ENCODE measurements at regions of chr19 and their contacts with region 1.

Region 1: GRCh38 chr19:572140-572742 is at the start of gene BSG:
- DNase-seq: peak; percentile 94 to 99 (median 97)
- H3K4me3 ChIP-seq: peak within 1 kb of the TSS; percentile 69 to 100 (median 97)
- H3K27ac ChIP-seq: peak within 1 kb of the TSS; percentile 28 to 98 (median 91)
- H3K27me3 ChIP-seq: peaks cover 0 to 4% (median 0%) of the 10 kb centered on the region in 45 donors
- CTCF ChIP-seq: peak in 17 of 56 donors; percentile 2 to 38 (median 21)
- total RNA-seq, gene BSG: 350 to 867 (median 549) TPM

Region 2: DNA sequence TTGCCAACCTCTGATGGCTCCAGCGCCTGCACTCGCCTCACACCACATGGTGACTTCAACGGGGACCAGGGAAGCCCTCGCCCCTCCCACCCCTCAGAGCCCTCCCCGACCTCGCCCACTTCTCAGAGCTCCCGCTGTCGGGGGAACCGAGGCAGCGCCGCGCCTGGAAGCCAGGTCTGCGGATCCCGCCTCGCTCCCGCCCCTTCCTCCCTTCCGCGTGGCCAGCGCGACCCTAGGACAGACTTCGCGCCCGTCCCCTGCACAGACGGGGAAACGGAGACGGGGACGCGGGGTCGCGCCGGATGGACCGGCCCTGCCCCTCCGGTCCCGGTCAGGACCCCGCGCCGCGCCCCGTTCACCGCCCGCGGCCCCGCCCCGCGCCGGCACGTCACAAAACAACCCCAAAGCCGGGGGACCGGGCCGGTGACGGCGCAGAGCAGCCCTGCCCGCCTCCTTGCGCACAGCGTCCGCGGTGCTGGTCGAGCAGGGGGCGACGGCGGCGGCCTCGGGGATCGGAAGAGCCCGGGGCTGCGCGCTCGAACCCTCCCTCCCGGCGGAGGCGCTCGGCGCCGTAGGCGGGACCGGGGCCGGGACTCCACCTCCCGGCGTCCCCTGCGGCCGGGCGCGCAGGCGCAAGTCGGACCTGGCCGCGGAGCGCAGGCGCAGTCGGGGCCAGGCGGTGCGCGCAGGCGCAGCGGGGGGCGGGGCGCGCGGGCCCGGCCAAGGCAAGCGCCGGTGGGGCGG is 41.1 kb before region 1 on chr19:
- intact Hi-C with region 1: loop called (anchors 1 to 2 kb)
- DNase-seq: peak in 8 of 10 donors; percentile 46 to 91 (median 60)
- H3K4me3 ChIP-seq: peak overlapping the region; percentile 63 to 99 (median 92)
- H3K27ac ChIP-seq: peak overlapping the region; percentile 71 to 99 (median 94)
- H3K27me3 ChIP-seq: no peaks in the 10 kb centered on the region
- CTCF ChIP-seq: peak in 9 of 56 donors; percentile 8 to 41 (median 18)

Region 3: DNA sequence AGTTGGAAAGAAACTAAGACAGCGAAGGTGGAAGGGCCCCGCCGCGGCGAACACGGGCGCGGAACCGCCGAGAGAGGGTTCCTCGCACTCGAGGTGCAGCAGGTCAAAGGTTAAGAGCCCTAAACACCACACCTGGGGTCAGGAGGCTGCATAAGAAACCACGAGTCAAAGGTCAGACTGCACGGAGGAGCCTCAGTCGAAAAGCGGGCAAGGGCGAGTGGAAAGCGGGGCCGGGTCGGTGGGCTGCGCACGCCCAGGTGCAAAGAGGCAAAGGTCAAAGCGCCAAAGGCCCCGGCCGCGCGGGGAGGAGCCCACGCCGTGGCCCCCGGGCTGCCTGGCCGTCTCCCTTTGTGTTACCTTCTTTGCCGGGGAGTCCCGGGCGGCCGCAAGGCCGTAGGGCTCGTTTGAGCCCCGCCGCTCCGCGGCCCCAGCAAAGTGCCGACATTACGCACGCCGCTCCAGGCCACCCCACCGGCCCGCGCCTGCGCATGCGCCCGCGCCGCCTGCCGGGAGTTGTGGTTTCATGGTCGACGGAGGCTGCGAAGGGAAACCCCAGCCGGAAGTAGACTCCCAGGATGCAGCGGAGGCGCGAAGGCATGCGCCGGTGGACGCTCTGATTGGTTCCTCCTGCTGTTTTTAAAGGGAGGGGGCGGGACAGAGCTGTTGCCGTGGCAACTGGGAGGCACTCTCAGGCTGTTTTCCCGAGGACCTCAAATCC is 61.0 kb after region 1 on chr19 and contains the start of gene POLRMT:
- intact Hi-C with region 1: loop called in 1 of 2 experiments (anchors 5 kb)
- DNase-seq: peak; percentile 95 to 98 (median 97)
- H3K4me3 ChIP-seq: peak within 1 kb of the TSS; percentile 58 to 100 (median 95)
- H3K27ac ChIP-seq: peak within 1 kb of the TSS in 52 of 59 donors; percentile 37 to 92 (median 76)
- H3K27me3 ChIP-seq: no peaks in the 10 kb centered on the region
- CTCF ChIP-seq: peak in 43 of 56 donors; percentile 9 to 67 (median 36)
- total RNA-seq, gene POLRMT: 27.8 to 91.2 (median 61.9) TPM

Region 4: DNA sequence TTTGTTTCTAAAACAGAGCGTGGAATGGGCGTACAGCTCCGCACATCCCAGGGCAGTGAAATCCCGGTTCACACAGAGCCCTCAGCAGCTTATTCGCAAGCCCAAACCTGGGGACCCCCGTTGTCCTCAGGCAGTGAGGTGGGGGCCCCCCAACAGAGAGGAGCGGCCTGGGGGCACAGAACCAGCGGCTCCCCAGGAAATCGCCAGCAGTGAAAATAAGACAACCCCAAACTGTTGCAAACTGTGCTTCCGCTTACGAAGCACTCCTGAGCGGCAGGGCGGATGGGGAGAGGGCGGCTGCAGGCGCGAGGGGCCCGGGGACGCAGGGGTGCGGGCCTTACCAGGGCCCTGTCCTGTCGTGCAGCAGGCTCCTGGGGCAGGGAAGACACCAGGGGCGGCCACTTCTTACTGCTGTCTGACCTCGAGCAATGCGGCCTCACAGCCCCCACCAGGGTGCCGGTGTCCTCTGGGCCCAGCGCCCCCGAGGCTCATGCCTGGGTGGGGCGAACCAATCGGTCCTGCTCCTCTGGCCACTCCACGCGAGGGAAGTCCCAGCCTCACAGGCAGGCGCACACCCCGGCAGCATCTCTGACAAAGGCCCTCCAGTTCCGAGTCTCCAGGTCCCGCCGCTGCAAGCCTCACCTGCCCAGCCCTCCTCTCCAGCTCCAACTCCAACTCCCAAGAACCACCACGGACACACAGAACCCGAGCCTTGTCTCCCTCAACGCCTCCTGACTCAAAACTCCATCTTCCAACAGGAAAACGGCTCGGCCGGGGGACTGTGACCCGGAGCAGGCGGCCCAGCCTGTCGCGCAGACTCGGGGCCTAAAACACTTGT is 73.6 kb after region 1 on chr19:
- intact Hi-C with region 1: no loop called
- DNase-seq: no peak
- H3K4me3 ChIP-seq: no peak overlapping the region
- H3K27ac ChIP-seq: no peak overlapping the region
- H3K27me3 ChIP-seq: no peaks in the 10 kb centered on the region
- CTCF ChIP-seq: no peak

Region 5: GRCh38 chr19:892243-893050 is 320.2 kb after region 1 on chr19:
- intact Hi-C with region 1: loop called in 1 of 2 experiments (anchors 10 kb)
- DNase-seq: no peak
- H3K4me3 ChIP-seq: peak overlapping the region; percentile 59 to 98 (median 83)
- H3K27ac ChIP-seq: peak overlapping the region; percentile 73 to 100 (median 97)
- H3K27me3 ChIP-seq: no peaks in the 10 kb centered on the region
- CTCF ChIP-seq: peak in 1 of 56 donors; percentile 5